ENCODE measurements at regions of chr5 and their contacts with region 1.

Region 1: GRCh38 chr5:112210430-112211005 is 208.6 kb downstream of the EPB41L4A start:
- DNase-seq: no peak
- H3K4me3 ChIP-seq: no peak overlapping the region
- H3K27ac ChIP-seq: no peak overlapping the region
- H3K4me1 ChIP-seq: no peaks in the 10 kb centered on the region
- H3K27me3 ChIP-seq: no peaks in the 10 kb centered on the region
- CTCF ChIP-seq: peak in 8 of 11 experiments; percentile 6 to 50 (median 42)
- POLR2A ChIP-seq: no peak

Region 2: GRCh38 chr5:112419986-112420864 is 209.7 kb after region 1 on chr5:
- intact Hi-C with region 1: loop called (anchors 5 kb)
- DNase-seq: peak; percentile 91
- H3K4me3 ChIP-seq: peak overlapping the region; percentile 60 to 97 (median 82)
- H3K27ac ChIP-seq: peak overlapping the region in 7 of 8 donors; percentile 68 to 88 (median 84)
- H3K4me1 ChIP-seq: peaks cover 0 to 47% (median 29%) of the 10 kb centered on the region in 6 donors
- H3K27me3 ChIP-seq: peaks cover 0 to 59% (median 20%) of the 10 kb centered on the region in 7 donors
- CTCF ChIP-seq: peak; percentile 57 to 87 (median 78)
- POLR2A ChIP-seq: no peak